ENCODE measurements at regions of chr15 and their contacts with region 1.

Region 1: GRCh38 chr15:31338879-31339557 is 12.4 kb downstream of the KLF13 start:
- DNase-seq: peak; percentile 79
- ATAC-seq: peak; percentile 69
- H3K4me3 Mint-ChIP-seq: peak overlapping the region; percentile 41
- H3K27ac Mint-ChIP-seq: peak overlapping the region; percentile 85
- H3K4me1 Mint-ChIP-seq: peaks cover 97% of the 10 kb centered on the region
- H3K27me3 Mint-ChIP-seq: no peaks in the 10 kb centered on the region
- CTCF ChIP-seq: no peak

Region 2: GRCh38 chr15:31391687-31392671 is 53.0 kb after region 1 on chr15:
- CTCF ChIA-PET with region 1: no interaction called
- POLR2A ChIA-PET with region 1: no interaction called
- intact Hi-C with region 1: loop called (anchors 10 kb)
- DNase-seq: peak; percentile 89
- ATAC-seq: peak; percentile 87
- H3K4me3 Mint-ChIP-seq: peak overlapping the region; percentile 86
- H3K27ac Mint-ChIP-seq: peak overlapping the region; percentile 91
- H3K4me1 Mint-ChIP-seq: peaks cover 53% of the 10 kb centered on the region
- H3K27me3 Mint-ChIP-seq: no peaks in the 10 kb centered on the region
- CTCF ChIP-seq: no peak